Activated CD4-positive, alpha-beta memory T cell treated with anti-CD3 and anti-CD28 coated beads for 36 hours (primary cell): ENCODE measurements at regions of chr16 and their contacts with region 1.

Region 1: DNA sequence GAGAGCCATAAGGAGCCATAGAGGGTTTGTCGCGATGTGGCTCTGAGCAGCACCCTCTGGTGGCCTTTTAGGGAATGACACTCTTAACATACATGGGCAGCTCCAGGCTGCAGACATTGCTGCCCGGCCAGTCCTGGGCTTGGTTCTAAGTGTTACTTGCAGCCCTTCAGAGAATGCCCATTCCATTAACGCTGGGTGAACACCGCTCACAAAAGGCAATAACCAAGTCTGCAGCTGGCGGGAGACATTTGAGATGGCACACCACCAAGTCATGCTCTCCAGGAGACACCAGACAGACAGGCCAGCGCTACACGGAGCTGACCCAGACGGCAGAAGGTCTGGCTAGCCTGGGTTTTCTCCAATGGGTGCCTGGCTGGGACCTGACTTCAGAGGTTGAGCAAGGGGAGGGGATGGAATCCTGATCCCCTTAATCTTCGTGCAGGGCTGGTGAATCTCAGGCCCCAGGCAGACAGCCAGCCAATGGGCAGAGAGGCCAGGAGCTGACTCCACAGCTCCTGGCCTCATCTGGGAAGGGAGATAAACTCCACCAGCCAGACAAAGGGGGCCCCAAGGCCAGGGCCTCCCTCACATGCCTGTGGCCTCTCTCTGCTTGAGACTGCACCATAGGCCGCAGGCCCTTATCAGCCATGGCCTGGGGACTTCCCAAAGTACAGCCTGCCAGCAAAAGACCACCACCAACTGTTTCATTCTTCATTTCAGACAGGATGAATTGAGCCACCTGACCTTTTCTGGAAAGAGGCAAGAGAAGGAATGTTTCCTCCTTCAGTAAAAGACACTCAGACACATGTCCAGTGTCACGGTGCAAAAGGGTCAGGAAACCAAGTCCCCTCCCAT is 58.8 kb downstream of the ZDHHC7 start:
- DNase-seq: peak; percentile 79
- H3K4me3 Mint-ChIP-seq: no peak overlapping the region
- H3K27ac Mint-ChIP-seq: no peak overlapping the region
- H3K4me1 Mint-ChIP-seq: peaks cover 2% of the 10 kb centered on the region
- H3K27me3 Mint-ChIP-seq: no peaks in the 10 kb centered on the region

Region 2: DNA sequence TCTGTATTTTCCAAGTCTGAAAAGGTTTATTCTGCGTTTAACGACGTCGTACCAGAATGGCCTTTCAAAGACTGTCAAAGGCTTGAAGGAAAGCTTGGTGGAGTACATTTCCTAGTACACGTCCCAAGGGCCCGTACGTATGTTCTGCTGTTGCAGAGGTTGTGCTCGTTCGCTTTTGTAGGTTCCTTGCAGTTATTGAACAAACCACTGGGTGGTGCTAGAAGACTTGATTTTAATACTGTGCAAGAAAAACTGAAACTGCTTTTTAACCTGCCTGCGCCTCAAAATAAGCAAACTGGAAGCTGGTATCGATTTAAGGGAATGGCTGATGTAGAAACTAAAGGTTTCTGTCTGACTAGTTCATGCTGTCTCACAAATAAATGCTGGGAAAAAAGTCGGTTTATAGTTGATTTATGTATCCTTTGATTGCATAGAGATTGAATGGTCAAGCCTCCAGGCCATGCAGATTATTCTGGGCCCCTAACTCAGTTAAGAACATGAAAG is 198.2 kb before region 1 on chr16:
- CTCF ChIA-PET with region 1: interaction called, 93 read pairs
- POLR2A ChIA-PET with region 1: interaction called, 3 read pairs
- intact Hi-C with region 1: loop called (anchors 1 kb)
- DNase-seq: peak; percentile 65
- H3K4me3 Mint-ChIP-seq: peak overlapping the region; percentile 36
- H3K27ac Mint-ChIP-seq: no peak overlapping the region
- H3K4me1 Mint-ChIP-seq: peaks cover 87% of the 10 kb centered on the region
- H3K27me3 Mint-ChIP-seq: no peaks in the 10 kb centered on the region

Region 3: GRCh38 chr16:84925092-84925772 is 27.3 kb before region 1 on chr16:
- CTCF ChIA-PET with region 1: interaction called, 77 read pairs
- POLR2A ChIA-PET with region 1: no interaction called
- intact Hi-C with region 1: loop called (anchors 1 kb)
- DNase-seq: peak; percentile 78
- H3K4me3 Mint-ChIP-seq: no peak overlapping the region
- H3K27ac Mint-ChIP-seq: no peak overlapping the region
- H3K4me1 Mint-ChIP-seq: no peaks in the 10 kb centered on the region
- H3K27me3 Mint-ChIP-seq: peaks cover 3% of the 10 kb centered on the region

Region 4: GRCh38 chr16:84930298-84931106 is 22.1 kb before region 1 on chr16:
- CTCF ChIA-PET with region 1: interaction called, 77 read pairs
- POLR2A ChIA-PET with region 1: interaction called, 3 read pairs
- intact Hi-C with region 1: loop called (anchors 1 kb)
- DNase-seq: peak; percentile 31
- H3K4me3 Mint-ChIP-seq: peak overlapping the region; percentile 18
- H3K27ac Mint-ChIP-seq: peak overlapping the region; percentile 64
- H3K4me1 Mint-ChIP-seq: no peaks in the 10 kb centered on the region
- H3K27me3 Mint-ChIP-seq: no peaks in the 10 kb centered on the region

Region 5: GRCh38 chr16:84941914-84942313 is 10.6 kb before region 1 on chr16:
- CTCF ChIA-PET with region 1: interaction called, 11 read pairs
- POLR2A ChIA-PET with region 1: no interaction called
- intact Hi-C with region 1: no loop called
- DNase-seq: no peak
- H3K4me3 Mint-ChIP-seq: no peak overlapping the region
- H3K27ac Mint-ChIP-seq: no peak overlapping the region
- H3K4me1 Mint-ChIP-seq: no peaks in the 10 kb centered on the region
- H3K27me3 Mint-ChIP-seq: peaks cover 4% of the 10 kb centered on the region

Region 6: DNA sequence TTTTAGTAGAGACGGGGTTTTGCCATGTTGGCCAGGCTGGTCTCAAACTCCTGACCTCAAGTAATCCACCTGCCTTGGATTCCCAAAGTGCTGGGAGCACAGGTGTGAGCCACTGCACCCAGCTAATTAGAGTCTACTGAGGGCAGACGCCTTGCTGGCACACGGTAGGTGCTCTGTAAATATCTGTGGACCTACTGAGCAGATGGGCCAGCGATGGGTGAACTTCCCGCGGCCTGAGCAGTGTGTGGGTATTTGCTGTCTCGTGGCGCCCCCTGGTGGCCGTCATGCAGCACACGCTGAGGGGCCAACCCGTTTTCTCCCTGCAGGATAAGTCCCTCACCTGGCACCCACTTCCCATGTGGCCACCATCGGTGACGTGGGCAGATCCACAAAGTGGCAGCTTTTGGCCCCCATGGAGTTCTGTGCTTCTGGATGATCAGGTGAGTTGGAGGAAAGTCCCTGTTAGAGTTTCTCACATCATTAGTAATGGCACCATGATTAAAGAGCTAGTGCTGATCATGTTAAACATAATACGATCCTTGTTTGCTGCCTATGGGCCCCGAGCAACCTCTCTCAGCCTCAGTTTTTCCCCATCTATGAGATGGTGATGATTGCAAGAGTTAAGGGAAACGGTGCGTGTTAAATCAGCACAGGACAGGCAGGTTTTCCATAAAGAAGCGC is 18.0 kb after region 1 on chr16:
- CTCF ChIA-PET with region 1: interaction called, 73 read pairs
- POLR2A ChIA-PET with region 1: no interaction called
- intact Hi-C with region 1: no loop called
- DNase-seq: peak; percentile 85
- H3K4me3 Mint-ChIP-seq: no peak overlapping the region
- H3K27ac Mint-ChIP-seq: no peak overlapping the region
- H3K4me1 Mint-ChIP-seq: no peaks in the 10 kb centered on the region
- H3K27me3 Mint-ChIP-seq: no peaks in the 10 kb centered on the region

Region 7: DNA sequence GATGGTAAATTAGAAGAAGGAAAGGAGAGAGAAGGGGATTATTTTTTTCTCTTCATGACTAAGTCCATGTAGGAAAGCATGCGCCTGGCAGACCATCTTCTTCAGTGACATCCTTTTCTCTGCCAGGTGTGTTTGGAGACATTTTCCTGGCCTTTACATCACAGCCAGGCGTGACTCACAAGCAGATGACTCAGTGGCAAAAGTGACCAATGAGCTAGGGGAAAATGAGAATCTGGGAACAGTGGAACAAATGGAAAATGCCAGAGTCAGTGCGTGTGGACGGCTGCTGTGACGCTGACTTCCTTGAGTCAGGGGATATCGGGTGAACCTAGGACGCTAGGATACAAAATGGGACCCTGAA is 84.5 kb after region 1 on chr16:
- CTCF ChIA-PET with region 1: no interaction called
- POLR2A ChIA-PET with region 1: no interaction called
- intact Hi-C with region 1: no loop called
- DNase-seq: peak; percentile 35
- H3K4me3 Mint-ChIP-seq: no peak overlapping the region
- H3K27ac Mint-ChIP-seq: no peak overlapping the region
- H3K4me1 Mint-ChIP-seq: peaks cover 14% of the 10 kb centered on the region
- H3K27me3 Mint-ChIP-seq: no peaks in the 10 kb centered on the region

Region 8: DNA sequence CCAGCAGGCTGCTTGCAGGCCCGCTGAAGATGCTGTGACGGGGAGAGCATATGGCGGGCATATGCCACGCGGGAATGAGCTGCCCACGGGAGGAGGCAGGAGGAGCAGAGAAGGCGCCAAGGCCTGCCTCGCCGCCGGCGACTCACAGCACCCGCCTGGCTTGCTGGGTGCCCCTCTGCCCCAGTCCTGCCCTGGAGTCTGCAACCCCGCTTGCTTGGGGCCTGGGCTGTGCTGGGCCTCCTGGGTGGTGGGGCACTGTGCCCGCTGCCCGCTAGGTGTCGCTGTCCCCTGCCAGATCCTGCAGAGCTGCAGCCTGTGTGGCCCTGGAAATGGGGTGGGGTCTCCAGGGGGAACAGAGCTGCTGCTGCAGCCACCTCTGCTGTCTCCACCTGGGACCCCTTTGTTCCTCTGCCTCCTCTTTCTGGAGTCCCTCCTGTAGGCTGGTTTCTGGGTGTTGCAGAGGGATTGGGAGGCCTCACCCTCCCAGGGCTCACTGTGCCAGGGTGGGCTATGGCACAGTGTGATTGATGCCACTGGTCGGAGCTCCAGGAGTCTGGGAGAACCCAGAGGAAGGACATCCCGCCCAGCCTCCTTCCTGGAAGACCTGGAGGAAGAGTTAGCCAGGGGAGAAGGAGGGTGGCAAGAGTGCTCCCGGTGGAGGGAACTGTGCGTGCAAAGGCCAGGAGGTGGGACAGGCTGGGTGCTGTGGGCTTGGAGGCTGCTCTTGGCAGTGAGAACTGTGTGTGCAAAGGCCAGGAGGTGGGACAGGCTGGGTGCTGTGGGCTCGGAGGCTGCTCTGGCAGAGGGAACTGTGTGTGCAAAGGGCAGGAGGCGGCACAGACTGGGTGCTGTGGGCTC is 300.8 kb after region 1 on chr16:
- CTCF ChIA-PET with region 1: no interaction called
- POLR2A ChIA-PET with region 1: no interaction called
- intact Hi-C with region 1: no loop called
- DNase-seq: peak; percentile 72
- H3K4me3 Mint-ChIP-seq: no peak overlapping the region
- H3K27ac Mint-ChIP-seq: no peak overlapping the region
- H3K4me1 Mint-ChIP-seq: no peaks in the 10 kb centered on the region
- H3K27me3 Mint-ChIP-seq: no peaks in the 10 kb centered on the region